ENCODE measurements at regions of chr5 and their contacts with region 1.

Region 1: DNA sequence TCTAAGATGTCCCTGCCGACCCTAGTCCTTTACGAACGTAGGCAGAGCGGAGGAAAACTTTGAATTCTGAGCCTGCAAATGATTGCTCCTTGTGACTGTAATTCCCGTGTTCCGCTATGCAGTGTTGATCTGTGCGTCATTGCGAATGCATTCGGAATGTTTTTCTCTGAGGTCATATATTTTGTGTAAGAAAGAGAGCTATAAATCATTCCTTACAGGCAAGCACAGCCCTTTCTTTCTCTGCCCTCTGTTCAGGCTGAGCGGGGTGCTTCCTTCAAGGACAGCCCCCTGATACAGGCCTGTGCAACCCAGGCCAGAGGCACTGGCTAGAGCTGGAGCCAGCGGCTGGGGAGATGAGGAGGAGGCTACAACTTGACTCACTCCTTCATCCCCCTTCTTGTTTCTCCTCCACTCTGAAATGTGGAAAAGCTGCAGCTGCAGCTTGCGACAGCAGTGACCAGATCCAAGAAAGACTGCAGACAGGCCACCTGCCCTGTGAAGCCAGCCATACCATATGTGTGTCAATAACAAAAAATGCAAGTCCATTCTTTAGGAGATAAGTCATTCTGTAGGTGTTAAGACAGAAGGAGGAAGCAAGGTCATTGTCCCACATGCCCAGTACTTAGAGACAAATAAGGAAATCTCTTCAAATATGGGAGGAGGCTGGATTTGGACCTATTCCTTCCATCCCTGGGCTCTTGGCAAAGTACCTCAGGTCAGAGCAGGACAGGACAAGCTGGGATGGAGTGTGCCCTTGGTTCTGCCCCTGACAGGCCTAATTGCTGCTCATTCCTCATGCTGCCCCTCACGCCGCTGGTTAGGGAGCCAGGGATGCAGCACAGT is 345.7 kb upstream of the WWC1 start:
- DNase-seq: peak; percentile 98
- ATAC-seq: peak; percentile 92
- H3K4me3 ChIP-seq: no peak overlapping the region
- H3K27ac ChIP-seq: peak overlapping the region; percentile 91
- H3K4me1 ChIP-seq: peaks cover 15% of the 10 kb centered on the region
- H3K27me3 ChIP-seq: no peaks in the 10 kb centered on the region
- CTCF ChIP-seq: no peak
- POLR2A ChIP-seq: peak; percentile 47; the same call in 1 of the 2 replicates
- RAD21 ChIP-seq: no peak

Region 2: DNA sequence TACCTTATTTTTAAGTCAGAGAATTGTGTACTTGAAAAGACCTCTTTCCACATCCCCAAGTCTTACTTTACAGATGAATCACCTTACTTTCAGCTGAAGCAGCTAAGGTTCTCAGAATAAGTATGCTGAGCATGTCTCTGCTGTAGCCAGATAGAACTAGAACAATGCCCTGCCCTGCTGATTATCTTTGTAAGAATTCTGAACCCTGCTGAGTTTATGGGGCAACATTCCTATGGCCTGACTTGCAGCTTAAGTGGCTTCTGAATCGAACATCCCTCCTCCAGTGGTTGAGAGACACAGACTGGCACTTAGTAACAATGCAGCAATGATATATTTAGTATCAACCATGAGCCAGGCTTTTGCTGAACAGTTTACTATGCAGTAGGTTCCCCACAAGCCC is 246.3 kb before region 1 on chr5:
- CTCF ChIA-PET with region 1: no interaction called
- POLR2A ChIA-PET with region 1: no interaction called
- dilution Hi-C with region 1: no loop called
- in situ Hi-C with region 1: no loop called
- intact Hi-C with region 1: loop called (anchors 1 kb)
- DNase-seq: peak; percentile 99
- ATAC-seq: peak; percentile 96
- H3K4me3 ChIP-seq: no peak overlapping the region
- H3K27ac ChIP-seq: no peak overlapping the region
- H3K4me1 ChIP-seq: peaks cover 9% of the 10 kb centered on the region
- H3K27me3 ChIP-seq: no peaks in the 10 kb centered on the region
- CTCF ChIP-seq: no peak; the same call in 1 of the 2 replicates
- POLR2A ChIP-seq: no peak
- RAD21 ChIP-seq: no peak

Region 3: DNA sequence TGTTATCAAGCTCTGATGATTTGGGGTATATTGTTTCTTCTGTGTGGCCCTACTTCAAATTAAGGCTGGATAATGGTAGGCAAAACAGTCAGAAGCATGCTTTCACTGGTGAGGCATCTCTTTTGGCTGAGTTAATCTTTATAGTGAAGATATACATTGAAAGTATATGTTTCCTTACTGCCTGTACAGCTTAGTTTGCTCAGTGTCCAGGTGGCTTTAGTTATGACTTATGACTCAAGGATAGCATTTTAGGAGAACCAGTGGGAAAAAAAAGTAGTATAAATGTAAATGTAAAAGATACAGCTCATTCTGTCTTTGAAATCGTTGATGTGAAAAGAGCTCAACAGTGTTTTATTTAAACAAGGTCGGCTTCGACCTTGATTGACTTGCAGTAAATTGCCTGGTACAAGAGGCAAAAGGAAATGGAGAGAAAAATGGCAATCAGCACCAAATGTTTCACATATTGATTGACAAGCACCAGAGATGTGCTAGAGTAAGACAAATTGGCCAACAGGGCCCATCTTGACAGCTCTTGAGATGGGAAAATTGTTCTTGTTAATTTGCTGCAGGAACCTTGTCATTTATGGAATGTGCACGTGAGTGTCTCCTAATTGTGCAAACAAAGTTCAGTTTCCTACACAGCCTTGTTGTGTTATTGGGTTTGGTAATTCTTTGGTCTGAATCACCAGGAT is 101.7 kb before region 1 on chr5:
- CTCF ChIA-PET with region 1: no interaction called
- POLR2A ChIA-PET with region 1: interaction called, 14 read pairs
- dilution Hi-C with region 1: no loop called
- in situ Hi-C with region 1: no loop called
- intact Hi-C with region 1: no loop called
- DNase-seq: no peak
- ATAC-seq: no peak
- H3K4me3 ChIP-seq: no peak overlapping the region
- H3K27ac ChIP-seq: no peak overlapping the region
- H3K4me1 ChIP-seq: no peaks in the 10 kb centered on the region
- H3K27me3 ChIP-seq: peaks cover 2% of the 10 kb centered on the region; the same call in 1 of the 2 replicates
- CTCF ChIP-seq: no peak
- POLR2A ChIP-seq: no peak
- RAD21 ChIP-seq: no peak

Region 4: DNA sequence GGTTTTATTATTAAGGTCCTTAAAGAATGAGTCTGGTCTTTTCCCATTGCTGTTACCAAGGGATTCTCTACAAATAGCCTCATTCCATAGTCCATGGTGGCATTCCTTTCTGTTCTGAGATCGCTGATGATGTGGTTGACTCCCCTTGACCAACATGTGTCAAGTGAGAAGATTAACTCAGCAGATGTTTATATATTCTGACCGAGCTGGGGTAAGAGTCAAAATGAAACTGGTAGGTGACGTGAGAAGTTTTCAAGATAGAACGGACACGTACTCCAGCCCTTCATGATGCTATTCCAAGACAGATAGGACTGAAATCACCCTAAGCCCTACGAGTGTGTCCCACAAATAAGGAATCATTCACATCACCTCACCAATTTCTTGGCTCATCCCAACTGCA is 190.1 kb after region 1 on chr5:
- CTCF ChIA-PET with region 1: no interaction called
- POLR2A ChIA-PET with region 1: no interaction called
- dilution Hi-C with region 1: no loop called
- in situ Hi-C with region 1: no loop called
- intact Hi-C with region 1: no loop called
- DNase-seq: no peak
- ATAC-seq: no peak
- H3K4me3 ChIP-seq: no peak overlapping the region
- H3K27ac ChIP-seq: no peak overlapping the region
- H3K4me1 ChIP-seq: no peaks in the 10 kb centered on the region
- H3K27me3 ChIP-seq: no peaks in the 10 kb centered on the region
- CTCF ChIP-seq: no peak
- POLR2A ChIP-seq: no peak
- RAD21 ChIP-seq: no peak